Caco-2 (cell line): ENCODE measurements at regions of chr20 and their contacts with region 1.

Region 1: GRCh38 chr20:53578492-53579222 is 15.0 kb downstream of the ZNF217 start:
- DNase-seq: peak; percentile 80 to 93
- H3K4me3 ChIP-seq: no peak overlapping the region
- H3K4me3 Mint-ChIP-seq: peak overlapping the region; percentile 23
- H3K27ac Mint-ChIP-seq: peak overlapping the region; percentile 78
- H3K4me1 ChIP-seq: peaks cover 39% of the 10 kb centered on the region
- H3K4me1 Mint-ChIP-seq: peaks cover 26% of the 10 kb centered on the region
- H3K27me3 ChIP-seq: no peaks in the 10 kb centered on the region
- H3K27me3 Mint-ChIP-seq: no peaks in the 10 kb centered on the region
- CTCF ChIP-seq: peak; percentile 98 to 99

Region 2: GRCh38 chr20:53594068-53595017 is 15.7 kb after region 1 on chr20:
- CTCF ChIA-PET with region 1: interaction called, 6 read pairs
- POLR2A ChIA-PET with region 1: interaction called, 6 read pairs
- intact Hi-C with region 1: loop called (anchors 1 kb)
- DNase-seq: peak; percentile 99 to 100
- H3K4me3 ChIP-seq: peak overlapping the region; percentile 98
- H3K4me3 Mint-ChIP-seq: peak overlapping the region; percentile 87
- H3K27ac Mint-ChIP-seq: peak overlapping the region; percentile 80
- H3K4me1 ChIP-seq: peaks cover 38% of the 10 kb centered on the region
- H3K4me1 Mint-ChIP-seq: peaks cover 44% of the 10 kb centered on the region
- H3K27me3 ChIP-seq: no peaks in the 10 kb centered on the region
- H3K27me3 Mint-ChIP-seq: no peaks in the 10 kb centered on the region
- CTCF ChIP-seq: peak; percentile 64 to 79

Region 3: GRCh38 chr20:53660078-53660909 is 81.6 kb after region 1 on chr20:
- CTCF ChIA-PET with region 1: interaction called, 3 read pairs
- POLR2A ChIA-PET with region 1: no interaction called
- intact Hi-C with region 1: loop called (anchors 5 kb)
- DNase-seq: peak in 1 of 2 experiments; percentile 16
- H3K4me3 ChIP-seq: no peak overlapping the region
- H3K4me3 Mint-ChIP-seq: no peak overlapping the region
- H3K27ac Mint-ChIP-seq: peak overlapping the region; percentile 67
- H3K4me1 ChIP-seq: peaks cover 29% of the 10 kb centered on the region
- H3K4me1 Mint-ChIP-seq: peaks cover 53% of the 10 kb centered on the region
- H3K27me3 ChIP-seq: no peaks in the 10 kb centered on the region
- H3K27me3 Mint-ChIP-seq: no peaks in the 10 kb centered on the region
- CTCF ChIP-seq: no peak

Region 4: DNA sequence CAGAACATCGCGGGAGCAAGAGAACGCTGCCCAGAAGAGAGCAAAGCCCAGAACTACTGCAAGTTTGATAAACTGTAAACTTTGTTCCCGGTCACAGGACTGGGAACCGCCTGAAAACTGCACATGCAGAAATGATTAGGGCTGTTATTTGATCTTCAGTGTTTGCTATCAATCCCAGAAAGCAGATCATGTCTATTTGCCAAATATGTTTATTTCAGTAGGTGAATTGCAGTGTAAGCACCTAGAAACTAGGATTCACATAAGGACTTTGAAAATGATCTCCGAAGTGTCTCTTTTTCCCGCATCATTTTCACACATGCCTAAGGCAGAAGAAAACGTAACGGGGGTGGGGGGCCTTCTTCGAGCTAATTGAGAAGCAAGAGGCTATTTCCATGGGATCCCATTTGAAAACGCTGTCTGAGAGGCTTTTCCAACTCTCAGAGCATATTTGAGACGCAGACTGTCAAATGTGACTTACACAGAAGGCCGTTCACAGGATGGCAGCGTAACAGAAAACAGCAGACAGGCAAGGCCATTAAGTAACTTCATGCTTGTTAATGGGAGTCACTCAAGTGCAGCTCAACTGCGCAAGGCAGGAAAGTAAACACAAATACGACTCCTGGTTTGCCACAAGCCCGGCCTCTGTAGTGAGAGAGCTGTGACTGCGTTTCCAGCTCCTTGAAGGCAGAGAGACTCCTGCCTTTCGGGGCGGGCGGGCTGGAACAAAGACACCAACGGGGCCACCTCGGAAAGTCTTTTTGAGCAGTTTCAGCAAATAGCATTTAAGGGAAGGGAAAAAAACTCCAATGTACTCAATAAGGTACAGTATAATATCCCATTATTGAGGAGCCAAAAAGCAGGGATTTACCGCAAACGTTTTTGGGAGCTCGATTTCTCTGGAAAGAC is 159.6 kb after region 1 on chr20:
- CTCF ChIA-PET with region 1: interaction called, 6 read pairs
- POLR2A ChIA-PET with region 1: no interaction called
- intact Hi-C with region 1: loop called (anchors 1 kb)
- DNase-seq: peak; percentile 94 to 97
- H3K4me3 ChIP-seq: peak overlapping the region; percentile 35
- H3K4me3 Mint-ChIP-seq: peak overlapping the region; percentile 72
- H3K27ac Mint-ChIP-seq: peak overlapping the region; percentile 95
- H3K4me1 ChIP-seq: peaks cover 67% of the 10 kb centered on the region
- H3K4me1 Mint-ChIP-seq: peaks cover 68% of the 10 kb centered on the region
- H3K27me3 ChIP-seq: no peaks in the 10 kb centered on the region
- H3K27me3 Mint-ChIP-seq: no peaks in the 10 kb centered on the region
- CTCF ChIP-seq: no peak

Region 5: GRCh38 chr20:53786445-53787267 is 208.0 kb after region 1 on chr20:
- CTCF ChIA-PET with region 1: interaction called, 6 read pairs
- POLR2A ChIA-PET with region 1: no interaction called
- intact Hi-C with region 1: loop called (anchors 1 kb)
- DNase-seq: peak; percentile 47 to 67
- H3K4me3 ChIP-seq: no peak overlapping the region; the same call in 1 of the 2 replicates
- H3K4me3 Mint-ChIP-seq: peak overlapping the region; percentile 39
- H3K27ac Mint-ChIP-seq: peak overlapping the region; percentile 59
- H3K4me1 ChIP-seq: peaks cover 71% of the 10 kb centered on the region
- H3K4me1 Mint-ChIP-seq: peaks cover 70% of the 10 kb centered on the region
- H3K27me3 ChIP-seq: no peaks in the 10 kb centered on the region
- H3K27me3 Mint-ChIP-seq: no peaks in the 10 kb centered on the region
- CTCF ChIP-seq: peak in 1 of 2 experiments; percentile 13

Region 6: DNA sequence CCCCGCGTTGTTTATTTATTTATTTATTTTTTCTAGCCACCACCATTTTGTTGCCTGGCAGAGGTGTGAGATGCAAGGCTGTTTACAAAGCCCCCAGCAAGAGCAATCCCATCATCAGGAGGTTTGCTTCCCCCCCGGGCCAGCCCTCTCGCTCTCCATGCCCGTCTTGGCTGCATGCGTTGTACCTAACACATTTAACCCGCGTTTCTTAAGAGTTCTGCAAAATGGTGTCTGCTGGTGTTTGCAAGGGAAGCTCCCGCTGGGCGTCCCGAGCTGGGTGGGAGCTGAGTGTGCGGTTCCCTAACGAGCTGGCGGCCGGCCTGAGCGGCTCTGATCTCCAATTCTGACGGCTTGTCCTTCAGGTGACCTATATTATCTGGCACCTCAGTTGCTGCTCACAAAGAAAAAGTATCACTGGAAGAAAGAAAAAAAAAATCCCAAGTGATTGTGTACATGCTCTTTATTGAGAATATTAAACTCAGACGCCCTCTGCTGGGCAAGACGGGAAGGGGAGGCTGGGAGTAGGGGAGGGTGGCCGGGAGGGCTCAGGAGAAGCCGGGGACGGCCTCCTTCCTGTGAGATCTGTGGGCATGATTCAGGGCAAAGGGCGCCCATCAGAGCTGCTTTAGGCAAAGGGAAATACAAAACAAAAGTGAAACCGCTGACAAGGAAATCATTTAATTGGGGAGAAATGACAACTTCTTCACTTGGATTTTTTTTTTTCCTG is 337.0 kb after region 1 on chr20:
- CTCF ChIA-PET with region 1: interaction called, 35 read pairs
- POLR2A ChIA-PET with region 1: no interaction called
- intact Hi-C with region 1: loop called (anchors 1 kb)
- DNase-seq: peak; percentile 98
- H3K4me3 ChIP-seq: peak overlapping the region; percentile 68
- H3K4me3 Mint-ChIP-seq: peak overlapping the region; percentile 92
- H3K27ac Mint-ChIP-seq: peak overlapping the region; percentile 82
- H3K4me1 ChIP-seq: peaks cover 10% of the 10 kb centered on the region
- H3K4me1 Mint-ChIP-seq: peaks cover 34% of the 10 kb centered on the region
- H3K27me3 ChIP-seq: no peaks in the 10 kb centered on the region
- H3K27me3 Mint-ChIP-seq: no peaks in the 10 kb centered on the region
- CTCF ChIP-seq: peak; percentile 98 to 99

Region 7: GRCh38 chr20:54199721-54200176 is 621.1 kb after region 1 on chr20:
- CTCF ChIA-PET with region 1: no interaction called
- POLR2A ChIA-PET with region 1: no interaction called
- intact Hi-C with region 1: loop called (anchors 5 kb)
- DNase-seq: peak; percentile 84 to 91
- H3K4me3 ChIP-seq: no peak overlapping the region
- H3K4me3 Mint-ChIP-seq: no peak overlapping the region
- H3K27ac Mint-ChIP-seq: no peak overlapping the region
- H3K4me1 ChIP-seq: peaks cover 6% of the 10 kb centered on the region; the same call in 1 of the 2 replicates
- H3K4me1 Mint-ChIP-seq: peaks cover 11% of the 10 kb centered on the region
- H3K27me3 ChIP-seq: no peaks in the 10 kb centered on the region; the same call in 1 of the 2 replicates
- H3K27me3 Mint-ChIP-seq: peaks cover 9% of the 10 kb centered on the region
- CTCF ChIP-seq: peak; percentile 99